ENCODE measurements at regions of chr1 and their contacts with region 1.

Region 1: DNA sequence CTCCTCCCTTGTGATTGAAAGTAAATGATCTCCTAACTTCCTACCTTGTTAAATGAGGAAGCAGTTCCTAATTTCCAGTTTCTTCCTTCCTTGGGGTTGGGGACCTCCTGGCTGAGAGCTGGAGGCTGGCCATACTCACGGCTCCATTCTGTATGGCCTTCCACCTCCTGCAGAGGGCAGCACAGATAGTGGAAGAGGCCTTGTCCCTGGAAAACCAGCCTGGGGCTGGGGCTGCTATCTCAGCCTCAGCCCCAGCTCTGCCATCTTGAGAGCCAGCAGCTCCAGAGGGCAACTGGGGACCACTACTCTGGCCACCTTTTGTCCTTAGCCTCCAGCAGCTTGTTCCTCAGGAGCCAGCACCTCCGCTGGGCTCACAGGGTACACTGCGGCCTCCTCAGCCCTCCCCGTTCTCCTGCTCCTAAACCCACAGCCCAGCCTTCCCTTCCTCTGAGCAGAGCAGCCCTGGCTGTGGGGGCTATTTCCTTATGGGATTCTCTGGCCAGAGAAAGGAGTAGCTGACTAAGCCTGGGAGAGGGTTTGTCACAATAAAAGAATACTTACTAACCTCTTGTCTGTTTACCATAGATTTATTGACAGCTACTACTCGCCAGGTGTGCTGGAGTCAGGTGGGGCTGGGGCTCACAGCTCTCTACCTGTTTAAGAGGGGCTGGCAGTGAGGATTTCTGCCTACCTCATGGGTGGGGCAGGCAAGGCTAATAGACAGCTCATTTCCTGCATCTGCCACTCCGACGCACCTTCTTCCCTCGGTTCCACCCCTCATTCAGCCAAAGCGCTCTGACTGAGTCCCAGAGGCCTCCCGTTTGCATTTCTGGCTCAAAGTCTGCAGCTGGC is 6.3 kb downstream of the TMEM234 start:
- DNase-seq: peak; percentile 44 to 58
- ATAC-seq: peak; percentile 65 to 85 (median 78)
- H3K4me3 ChIP-seq: no peak overlapping the region
- H3K27ac ChIP-seq: peak overlapping the region in 5 of 10 donors; percentile 11 to 41 (median 19)
- H3K4me1 ChIP-seq: peaks cover 2 to 20% (median 9%) of the 10 kb centered on the region in 9 donors
- H3K27me3 ChIP-seq: no peaks in the 10 kb centered on the region
- CTCF ChIP-seq: peak; percentile 41 to 85 (median 78)

Region 2: GRCh38 chr1:32040711-32041110 is 175.1 kb before region 1 on chr1:
- intact Hi-C with region 1: no loop called
- DNase-seq: no peak
- ATAC-seq: peak in 3 of 8 donors; percentile 11 to 33 (median 17)
- H3K4me3 ChIP-seq: no peak overlapping the region
- H3K27ac ChIP-seq: no peak overlapping the region
- H3K4me1 ChIP-seq: peaks cover 0 to 8% (median under 1%) of the 10 kb centered on the region in 9 donors
- H3K27me3 ChIP-seq: no peaks in the 10 kb centered on the region
- CTCF ChIP-seq: no peak

Region 3: GRCh38 chr1:32138943-32139342 is 76.9 kb before region 1 on chr1:
- intact Hi-C with region 1: no loop called
- DNase-seq: no peak
- ATAC-seq: no peak
- H3K4me3 ChIP-seq: no peak overlapping the region
- H3K27ac ChIP-seq: no peak overlapping the region
- H3K4me1 ChIP-seq: peaks cover 0 to 37% (median 26%) of the 10 kb centered on the region in 9 donors
- H3K27me3 ChIP-seq: no peaks in the 10 kb centered on the region
- CTCF ChIP-seq: no peak

Region 4: DNA sequence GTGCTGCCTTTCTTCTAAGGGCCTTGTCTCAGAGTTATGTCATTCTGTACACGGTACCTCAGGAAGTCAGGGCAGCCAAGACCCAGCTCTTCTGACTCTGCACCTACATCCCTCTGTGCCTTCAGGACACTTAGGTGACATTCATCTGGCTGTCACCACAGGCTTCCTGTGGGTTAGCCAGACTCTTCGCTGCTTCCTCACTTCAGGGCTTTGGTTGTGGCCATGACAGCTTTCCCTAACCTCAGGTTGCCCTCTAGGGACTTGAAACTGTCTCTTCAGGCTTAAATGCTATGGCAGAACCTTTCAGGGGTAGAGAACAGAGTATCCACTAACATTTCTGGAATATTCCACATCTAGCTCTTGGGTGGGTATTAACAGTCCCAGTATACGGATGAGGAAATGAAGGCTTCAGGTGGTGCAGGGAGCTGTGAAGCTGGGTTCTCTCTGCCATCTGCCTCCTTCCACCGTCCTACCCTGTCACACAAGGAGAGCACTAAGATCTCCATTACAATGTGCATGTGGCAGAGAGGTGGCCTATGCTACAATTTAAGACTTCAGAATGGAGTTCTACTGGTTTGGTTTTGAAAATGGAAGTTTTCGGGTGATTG is 156.4 kb after region 1 on chr1:
- intact Hi-C with region 1: loop called in 1 of 10 experiments (anchors 10 kb)
- DNase-seq: no peak
- ATAC-seq: peak in 2 of 8 donors; percentile 7 to 22
- H3K4me3 ChIP-seq: no peak overlapping the region
- H3K27ac ChIP-seq: no peak overlapping the region
- H3K4me1 ChIP-seq: no peaks in the 10 kb centered on the region
- H3K27me3 ChIP-seq: no peaks in the 10 kb centered on the region
- CTCF ChIP-seq: peak in 1 of 9 donors; percentile 24